Esophagus muscularis mucosa (tissue), 4 donors: ENCODE measurements at regions of chr16 and their contacts with region 1.

Region 1: DNA sequence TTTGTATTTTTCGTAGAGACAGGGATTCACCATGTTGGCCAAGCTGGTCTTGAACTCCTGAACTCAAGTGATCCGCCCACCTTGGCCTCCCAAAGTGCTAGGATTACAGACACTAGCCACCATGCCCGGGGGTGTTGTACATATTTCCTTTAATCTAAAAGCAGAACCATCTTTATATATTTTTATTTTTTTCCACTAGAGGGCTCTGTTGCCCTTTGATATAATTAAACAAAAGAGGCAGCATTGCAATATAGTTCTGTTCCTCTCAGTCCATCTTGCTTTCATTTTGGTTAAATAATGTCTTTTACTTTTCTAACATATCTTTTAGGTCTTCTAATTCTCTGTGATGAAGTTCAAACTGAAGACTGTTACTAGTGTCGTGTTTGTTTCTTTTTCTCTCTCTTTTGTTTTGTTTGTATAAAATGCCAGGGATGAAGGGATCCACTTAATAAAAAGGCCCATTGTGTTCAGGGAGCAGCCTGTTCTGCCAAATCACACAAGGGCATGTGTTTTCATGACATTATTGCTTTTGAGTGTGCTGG is 23.4 kb downstream of the WWOX start:
- DNase-seq: no peak
- H3K4me3 ChIP-seq: no peak overlapping the region
- H3K27ac ChIP-seq: peak overlapping the region in 1 of 4 donors; percentile 40
- H3K4me1 ChIP-seq: peaks cover 8 to 26% (median 20%) of the 10 kb centered on the region in 4 donors
- H3K27me3 ChIP-seq: no peaks in the 10 kb centered on the region
- CTCF ChIP-seq: peak; percentile 51 to 63 (median 55)
- EP300 ChIP-seq: no peak
- POLR2A ChIP-seq: no peak

Region 2: GRCh38 chr16:78235168-78235800 is 112.4 kb after region 1 on chr16:
- intact Hi-C with region 1: loop called (anchors 2 kb)
- DNase-seq: peak; percentile 94
- H3K4me3 ChIP-seq: no peak overlapping the region
- H3K27ac ChIP-seq: no peak overlapping the region
- H3K4me1 ChIP-seq: peaks cover 0 to 7% (median 7%) of the 10 kb centered on the region in 4 donors
- H3K27me3 ChIP-seq: no peaks in the 10 kb centered on the region
- CTCF ChIP-seq: peak; percentile 81 to 98 (median 82)
- EP300 ChIP-seq: no peak
- POLR2A ChIP-seq: no peak

Region 3: GRCh38 chr16:78437352-78437968 is 314.6 kb after region 1 on chr16:
- intact Hi-C with region 1: loop called (anchors 10 kb)
- DNase-seq: peak; percentile 50
- H3K4me3 ChIP-seq: no peak overlapping the region
- H3K27ac ChIP-seq: no peak overlapping the region
- H3K4me1 ChIP-seq: no peaks in the 10 kb centered on the region
- H3K27me3 ChIP-seq: no peaks in the 10 kb centered on the region
- CTCF ChIP-seq: peak; percentile 60 to 86 (median 66)
- EP300 ChIP-seq: no peak
- POLR2A ChIP-seq: no peak